ENCODE measurements at regions of chr2 and their contacts with region 1.

Region 1: DNA sequence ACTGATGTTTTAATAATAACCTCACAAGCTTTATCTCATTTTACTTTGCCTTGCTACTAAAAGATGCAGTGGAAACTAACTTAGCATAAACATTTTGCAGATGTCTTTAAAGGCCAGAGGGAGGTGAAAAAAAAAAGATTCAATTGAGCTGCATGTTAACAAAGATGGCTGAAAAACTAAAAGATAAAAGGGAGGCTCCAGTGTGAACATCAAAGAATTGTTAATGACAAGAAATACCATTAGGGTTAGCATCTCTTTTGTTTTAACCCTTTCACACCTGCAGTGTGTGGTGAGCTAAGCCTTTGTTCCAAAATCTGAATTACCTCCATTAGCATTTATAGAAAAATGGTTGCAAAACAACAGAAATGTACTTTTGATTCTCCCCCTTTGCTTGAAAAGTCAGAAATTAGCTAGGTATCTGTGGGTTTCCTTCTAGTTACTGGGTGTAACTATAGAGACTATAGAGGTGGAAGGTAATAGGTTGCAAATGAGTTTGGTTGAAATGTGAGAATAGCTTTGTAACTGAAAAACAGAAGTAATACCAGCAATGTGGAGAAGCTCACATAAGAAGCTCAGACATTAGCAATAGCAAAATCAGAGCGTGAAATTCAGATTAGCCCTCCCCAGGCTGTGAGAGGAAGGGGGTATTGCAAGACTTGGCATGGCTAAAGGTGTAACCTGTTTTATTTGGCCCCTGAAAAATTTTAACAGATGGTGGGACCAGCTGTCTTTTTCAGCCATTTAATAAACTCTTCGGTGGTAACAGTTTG is 34.8 kb upstream of the SP5 start:
- DNase-seq: no peak
- ATAC-seq: no peak
- H3K4me3 ChIP-seq: no peak overlapping the region
- H3K27ac ChIP-seq: no peak overlapping the region
- H3K4me1 ChIP-seq: no peaks in the 10 kb centered on the region
- H3K27me3 ChIP-seq: no peaks in the 10 kb centered on the region
- CTCF ChIP-seq: no peak

Region 2: DNA sequence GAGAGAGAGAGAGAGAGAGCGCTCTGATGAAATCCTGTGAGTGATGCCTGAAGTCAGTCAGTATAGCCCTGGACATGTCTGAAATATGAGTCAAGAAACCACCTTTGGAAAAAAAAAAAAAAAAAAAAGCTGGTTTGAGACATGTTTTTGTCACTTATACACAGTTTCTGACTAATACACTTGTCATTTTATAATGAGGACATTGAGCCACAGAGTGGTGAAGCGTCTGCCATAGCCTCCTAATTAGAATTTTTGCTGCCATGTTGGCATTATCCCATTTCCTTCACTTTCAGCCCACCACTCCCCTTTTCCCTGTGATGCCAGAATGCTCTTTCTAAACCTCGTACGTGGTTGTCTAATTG is 518.1 kb before region 1 on chr2:
- CTCF ChIA-PET with region 1: no interaction called
- POLR2A ChIA-PET with region 1: interaction called, 13 read pairs
- intact Hi-C with region 1: no loop called
- DNase-seq: peak; percentile 86
- ATAC-seq: peak; percentile 59
- H3K4me3 ChIP-seq: no peak overlapping the region
- H3K27ac ChIP-seq: peak overlapping the region; percentile 34; the same call in 1 of the 2 replicates
- H3K4me1 ChIP-seq: peaks cover 44% of the 10 kb centered on the region
- H3K27me3 ChIP-seq: no peaks in the 10 kb centered on the region
- CTCF ChIP-seq: no peak

Region 3: DNA sequence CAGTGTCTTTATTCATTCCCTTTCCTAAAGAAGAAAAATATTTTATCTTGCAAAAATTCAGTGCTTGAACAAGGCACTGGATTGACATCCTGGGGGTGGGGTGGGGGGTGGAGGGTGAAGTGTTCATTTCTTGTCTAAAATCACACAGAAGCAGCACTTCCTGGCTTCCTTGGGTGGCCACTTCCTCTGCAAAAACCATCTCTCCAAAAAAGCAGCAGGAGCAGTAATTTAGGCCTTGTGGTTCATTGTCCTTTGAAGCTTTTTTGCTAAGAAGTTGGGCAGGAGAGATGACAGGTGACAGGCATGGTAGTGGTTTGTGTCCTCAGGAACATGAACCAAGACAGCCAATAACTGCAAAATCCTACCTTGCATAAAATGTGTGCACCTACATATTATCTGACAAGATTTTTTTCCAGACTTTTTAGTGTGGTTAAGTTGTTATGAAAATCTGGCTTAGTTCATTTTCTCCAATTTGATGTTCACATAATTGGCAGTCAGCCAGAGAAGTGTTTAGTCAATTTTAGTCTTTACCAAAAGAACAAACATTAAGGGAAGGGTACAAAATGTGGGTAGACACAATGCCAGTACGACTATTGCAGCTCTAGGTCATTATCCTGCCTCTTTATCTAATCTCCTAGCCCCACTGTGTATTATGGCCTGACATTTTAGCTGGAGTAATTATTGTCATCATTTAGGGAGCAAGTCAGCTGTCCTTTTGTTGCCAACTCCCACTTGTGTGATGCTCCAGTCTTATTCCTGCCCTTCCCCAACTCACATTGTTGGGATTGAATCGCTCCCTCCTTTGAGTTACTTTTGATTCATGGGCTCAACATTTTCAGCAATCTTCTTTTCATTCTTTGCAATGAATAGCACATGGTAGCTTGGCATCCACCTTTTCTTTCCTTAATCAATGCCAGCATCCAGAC is 325.2 kb before region 1 on chr2:
- CTCF ChIA-PET with region 1: no interaction called
- POLR2A ChIA-PET with region 1: no interaction called
- intact Hi-C with region 1: no loop called
- DNase-seq: no peak
- ATAC-seq: no peak
- H3K4me3 ChIP-seq: no peak overlapping the region
- H3K27ac ChIP-seq: no peak overlapping the region
- H3K4me1 ChIP-seq: no peaks in the 10 kb centered on the region
- H3K27me3 ChIP-seq: no peaks in the 10 kb centered on the region
- CTCF ChIP-seq: no peak

Region 4: DNA sequence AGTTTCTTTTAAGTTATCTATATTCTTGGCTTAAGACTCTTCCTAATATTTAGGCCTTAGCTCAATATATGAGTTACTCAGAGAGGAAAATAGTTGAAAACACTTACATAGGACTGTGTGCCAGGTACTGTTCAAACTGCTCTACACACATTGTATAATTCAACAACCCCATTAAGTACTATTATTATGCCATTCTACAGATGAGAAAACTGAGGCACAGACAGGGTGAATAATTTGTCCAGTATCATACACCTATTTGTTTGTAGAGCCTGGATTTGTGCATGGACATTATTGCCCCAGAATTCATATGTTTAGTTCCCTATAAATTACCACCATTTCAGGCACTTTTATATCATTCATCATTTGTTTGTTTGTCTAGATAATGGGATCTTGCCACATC is 118.6 kb after region 1 on chr2:
- CTCF ChIA-PET with region 1: no interaction called
- POLR2A ChIA-PET with region 1: no interaction called
- intact Hi-C with region 1: loop called (anchors 10 kb)
- DNase-seq: no peak
- ATAC-seq: no peak
- H3K4me3 ChIP-seq: no peak overlapping the region
- H3K27ac ChIP-seq: no peak overlapping the region
- H3K4me1 ChIP-seq: no peaks in the 10 kb centered on the region
- H3K27me3 ChIP-seq: no peaks in the 10 kb centered on the region
- CTCF ChIP-seq: no peak